GM10248 (cell line): ENCODE measurements at regions of chr12 and their contacts with region 1.

Region 1: DNA sequence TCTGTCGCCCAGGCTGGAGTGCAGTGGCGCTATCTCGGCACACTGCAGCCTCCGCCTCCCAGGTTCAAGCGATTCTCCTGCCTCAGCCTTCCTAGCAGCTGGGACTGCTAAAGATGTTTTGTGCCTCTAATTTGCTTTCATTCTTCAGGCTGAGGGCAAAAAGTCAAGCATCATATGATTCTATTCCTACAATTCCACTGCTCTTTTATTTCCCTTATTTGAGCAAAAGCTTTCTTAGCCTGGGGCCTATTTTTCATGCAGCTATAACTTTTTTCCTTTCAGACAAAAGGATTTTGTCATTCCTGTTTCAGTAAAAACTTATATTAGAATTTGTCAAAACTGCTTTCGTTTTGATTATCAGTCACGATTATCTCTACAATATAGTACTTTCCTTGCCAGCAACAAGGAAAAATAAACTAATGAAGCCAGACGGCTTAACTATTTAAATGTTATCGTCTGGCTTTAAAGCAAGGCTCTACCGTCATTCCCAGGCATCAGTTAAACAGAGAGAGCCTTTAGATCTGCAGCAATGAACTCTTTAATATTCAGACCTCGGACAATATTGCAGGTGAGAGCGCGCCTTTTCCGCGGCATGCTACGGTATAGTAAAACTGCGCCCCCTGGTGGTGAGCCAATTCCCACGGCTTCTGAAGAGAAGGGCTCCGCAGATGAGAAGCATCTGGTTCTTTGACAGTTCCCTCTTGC is 1.4 kb upstream of the SLC2A13 start:
- DNase-seq: peak; percentile 75
- CTCF ChIP-seq: peak; percentile 88

Region 2: GRCh38 chr12:40010899-40011774 is 96.1 kb before region 1 on chr12:
- CTCF ChIA-PET with region 1: interaction called, 66 read pairs
- POLR2A ChIA-PET with region 1: no interaction called
- DNase-seq: peak; percentile 54
- CTCF ChIP-seq: peak; percentile 81

Region 3: DNA sequence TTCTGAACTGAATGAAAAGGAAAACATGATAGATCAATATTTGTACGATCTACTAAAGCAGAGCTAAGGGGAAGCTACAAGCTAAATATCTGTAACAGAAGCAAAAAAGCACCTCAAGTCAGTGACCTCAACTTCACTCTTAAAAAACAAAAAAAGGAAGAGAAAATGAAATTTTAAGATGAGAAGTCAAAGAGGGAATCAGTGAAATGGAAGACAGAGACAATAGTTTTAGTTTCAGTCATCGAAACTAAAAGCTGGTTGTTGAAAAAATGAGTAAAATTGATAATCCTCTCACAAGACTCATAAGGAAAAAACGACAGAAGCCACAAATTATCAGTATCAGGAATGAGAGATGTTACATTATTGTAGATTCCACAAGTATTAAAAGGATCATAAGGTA is 10.6 kb after region 1 on chr12:
- CTCF ChIA-PET with region 1: interaction called, 56 read pairs
- POLR2A ChIA-PET with region 1: no interaction called
- DNase-seq: peak; percentile 50
- CTCF ChIP-seq: no peak